ENCODE measurements at regions of chr3 and their contacts with region 1.

Region 1: DNA sequence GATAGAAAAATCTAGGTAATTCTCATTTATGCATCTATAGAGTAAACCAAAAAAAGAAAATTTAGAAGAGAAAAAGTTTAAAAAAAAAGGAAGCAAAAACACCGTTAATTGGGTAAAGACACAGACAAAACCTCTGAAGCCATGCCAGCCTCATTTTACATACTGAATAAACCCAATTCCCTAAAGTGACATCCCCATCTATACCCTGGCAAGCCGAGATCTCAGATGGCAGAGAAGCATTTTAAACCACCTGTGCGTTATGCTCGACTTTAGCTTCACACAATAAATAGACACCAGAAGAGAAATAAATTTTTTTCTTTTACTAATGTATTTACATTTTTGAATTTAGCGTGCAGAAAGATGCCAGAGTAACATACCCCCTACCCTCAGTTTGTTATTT is 382.1 kb downstream of the PLCL2 start:
- DNase-seq: no peak
- ATAC-seq: no peak
- H3K4me3 ChIP-seq: no peak overlapping the region
- H3K27ac ChIP-seq: no peak overlapping the region
- H3K4me1 ChIP-seq: peaks cover 0 to 15% (median 0%) of the 10 kb centered on the region in 9 donors
- H3K27me3 ChIP-seq: no peaks in the 10 kb centered on the region
- CTCF ChIP-seq: no peak

Region 2: DNA sequence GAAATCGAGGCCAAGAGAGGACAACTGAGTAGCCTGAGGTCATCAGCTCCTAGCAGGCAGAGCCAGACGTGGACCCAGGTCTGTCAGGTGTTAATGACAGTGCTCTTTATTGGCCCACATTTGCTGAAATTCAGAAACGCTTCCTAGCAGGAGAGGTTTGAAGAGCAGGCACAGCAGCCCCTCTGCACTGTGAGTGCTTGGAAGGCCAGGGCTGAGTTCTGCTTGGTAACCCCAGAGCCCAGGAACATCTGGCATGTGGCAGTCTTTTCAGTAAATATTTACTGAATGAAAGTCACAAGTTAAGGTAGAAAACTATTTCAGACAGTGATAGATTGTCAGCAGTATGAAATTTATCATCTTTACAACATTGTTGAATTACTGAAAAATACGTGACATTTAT is 279.7 kb before region 1 on chr3:
- intact Hi-C with region 1: no loop called
- DNase-seq: no peak
- ATAC-seq: peak in 1 of 8 donors; percentile 14
- H3K4me3 ChIP-seq: no peak overlapping the region
- H3K27ac ChIP-seq: no peak overlapping the region
- H3K4me1 ChIP-seq: peaks cover 0 to 53% (median 11%) of the 10 kb centered on the region in 9 donors
- H3K27me3 ChIP-seq: no peaks in the 10 kb centered on the region
- CTCF ChIP-seq: no peak

Region 3: DNA sequence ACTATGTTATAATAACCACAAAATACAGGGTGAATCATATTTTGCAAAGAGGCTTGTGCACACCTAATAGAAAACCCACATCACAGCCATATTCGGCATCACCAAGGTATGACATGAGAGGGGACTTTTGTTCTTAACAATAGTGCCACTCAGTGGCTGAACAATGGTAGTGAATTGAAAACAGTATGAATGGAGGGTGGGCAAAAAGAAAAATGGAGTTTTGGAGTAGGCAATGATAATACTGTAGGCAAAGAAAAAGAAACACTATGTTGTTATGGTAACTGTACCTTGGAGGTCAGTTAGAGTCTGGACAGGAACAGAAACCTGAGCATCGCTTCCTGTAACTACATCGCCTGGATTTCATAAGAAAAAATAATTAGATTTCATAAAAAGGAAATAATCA is 33.4 kb before region 1 on chr3:
- intact Hi-C with region 1: no loop called
- DNase-seq: peak in 1 of 2 donors; percentile 11
- ATAC-seq: peak; percentile 48 to 91 (median 82)
- H3K4me3 ChIP-seq: no peak overlapping the region
- H3K27ac ChIP-seq: no peak overlapping the region
- H3K4me1 ChIP-seq: peaks cover 0 to 35% (median 24%) of the 10 kb centered on the region in 9 donors
- H3K27me3 ChIP-seq: no peaks in the 10 kb centered on the region
- CTCF ChIP-seq: peak; percentile 40 to 84 (median 75)

Region 4: DNA sequence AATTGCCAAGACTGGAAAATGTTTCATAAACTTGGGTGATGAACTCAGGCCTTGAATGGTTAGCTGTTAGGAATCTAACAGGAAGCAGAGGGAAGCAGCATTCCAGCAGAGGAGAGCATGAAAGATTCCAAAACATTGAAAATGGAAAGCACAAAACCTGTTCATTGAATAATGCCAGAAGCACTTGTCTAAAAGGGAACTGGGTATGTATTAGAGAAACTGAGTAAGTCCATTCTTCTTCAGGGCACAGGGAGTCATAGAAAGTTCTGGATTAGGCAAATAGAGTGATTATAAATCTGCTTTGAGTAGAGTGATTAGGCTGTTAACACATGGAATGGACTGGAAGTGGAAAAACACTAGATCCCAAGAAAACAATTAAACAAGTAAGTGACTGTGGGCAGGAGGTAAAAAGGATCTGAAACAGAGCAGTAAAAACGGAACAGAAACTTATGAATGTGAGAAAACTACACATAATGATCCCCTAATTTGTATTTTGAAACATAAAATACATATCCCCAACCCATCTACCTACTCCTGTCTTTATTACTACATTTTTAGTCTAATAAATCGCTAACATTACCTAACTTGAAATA is 132.2 kb after region 1 on chr3:
- intact Hi-C with region 1: loop called in 1 of 10 experiments (anchors 5 kb)
- DNase-seq: no peak
- ATAC-seq: no peak
- H3K4me3 ChIP-seq: no peak overlapping the region
- H3K27ac ChIP-seq: no peak overlapping the region
- H3K4me1 ChIP-seq: no peaks in the 10 kb centered on the region
- H3K27me3 ChIP-seq: no peaks in the 10 kb centered on the region
- CTCF ChIP-seq: no peak

Region 5: DNA sequence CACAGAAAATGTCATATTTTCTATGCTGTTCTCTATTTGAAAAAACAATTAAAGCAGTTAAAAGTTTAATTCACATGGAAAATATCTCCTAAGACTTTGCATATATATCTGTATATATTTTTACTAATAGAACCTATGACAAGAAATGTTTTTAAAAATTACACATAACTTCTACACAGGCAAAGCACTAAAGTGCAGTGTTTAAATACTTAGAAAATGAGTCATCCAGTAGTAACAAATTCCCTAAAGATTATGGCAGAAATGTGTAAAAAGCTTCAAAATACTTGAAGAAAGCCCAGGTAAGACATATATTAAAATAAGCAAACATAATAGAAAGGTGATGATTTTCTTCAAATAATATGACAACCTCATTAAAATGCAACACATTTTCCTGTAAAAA is 239.0 kb after region 1 on chr3:
- intact Hi-C with region 1: no loop called
- DNase-seq: no peak
- ATAC-seq: no peak
- H3K4me3 ChIP-seq: no peak overlapping the region
- H3K27ac ChIP-seq: no peak overlapping the region
- H3K4me1 ChIP-seq: no peaks in the 10 kb centered on the region
- H3K27me3 ChIP-seq: no peaks in the 10 kb centered on the region
- CTCF ChIP-seq: no peak